ENCODE measurements at regions of chr16 and their contacts with region 1.

Region 1: DNA sequence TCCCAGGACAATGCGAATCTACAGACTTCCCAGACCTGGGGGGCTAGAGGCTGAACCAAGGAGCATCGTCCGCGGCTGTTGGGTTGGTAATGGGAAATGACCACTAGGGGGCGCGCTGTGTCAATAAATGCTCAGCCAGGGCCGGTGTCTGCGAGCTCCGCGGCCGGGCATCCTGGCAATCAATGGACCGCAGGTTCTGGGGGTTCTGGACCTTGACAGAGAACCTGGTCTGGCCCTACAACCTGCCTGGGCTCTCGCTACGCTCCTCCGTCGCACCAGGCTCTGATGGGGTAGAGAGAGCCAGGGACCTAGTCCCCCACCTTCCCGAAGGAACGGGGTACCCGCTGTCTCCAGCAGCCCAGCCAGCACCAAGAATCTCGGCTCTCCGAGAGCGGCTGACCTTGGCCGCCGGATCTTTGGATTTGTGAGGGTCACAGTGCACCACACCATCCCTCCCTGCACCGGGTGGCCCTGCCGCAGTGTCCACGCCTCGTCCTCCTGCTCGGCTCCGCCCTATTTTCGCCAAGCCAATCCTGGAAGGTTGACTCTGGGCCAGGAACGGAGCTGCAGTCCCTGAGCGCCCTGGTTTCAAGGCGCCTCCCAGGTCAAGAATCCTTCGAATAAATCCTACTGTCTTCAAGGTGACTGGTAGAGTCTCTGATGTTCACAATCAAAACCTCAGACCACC is 20.4 kb upstream of the BEAN1 start:
- DNase-seq: peak; percentile 94
- ATAC-seq: peak; percentile 82
- H3K4me3 Mint-ChIP-seq: peak overlapping the region; percentile 72
- H3K27ac Mint-ChIP-seq: peak overlapping the region; percentile 12
- H3K4me1 Mint-ChIP-seq: peaks cover 24% of the 10 kb centered on the region
- H3K27me3 Mint-ChIP-seq: peaks cover 4% of the 10 kb centered on the region

Region 2: GRCh38 chr16:65349626-65350025 is 1057.1 kb before region 1 on chr16:
- CTCF ChIA-PET with region 1: no interaction called
- POLR2A ChIA-PET with region 1: no interaction called
- intact Hi-C with region 1: no loop called
- DNase-seq: no peak
- ATAC-seq: no peak
- H3K4me3 Mint-ChIP-seq: no peak overlapping the region
- H3K27ac Mint-ChIP-seq: no peak overlapping the region
- H3K4me1 Mint-ChIP-seq: no peaks in the 10 kb centered on the region
- H3K27me3 Mint-ChIP-seq: no peaks in the 10 kb centered on the region

Region 3: DNA sequence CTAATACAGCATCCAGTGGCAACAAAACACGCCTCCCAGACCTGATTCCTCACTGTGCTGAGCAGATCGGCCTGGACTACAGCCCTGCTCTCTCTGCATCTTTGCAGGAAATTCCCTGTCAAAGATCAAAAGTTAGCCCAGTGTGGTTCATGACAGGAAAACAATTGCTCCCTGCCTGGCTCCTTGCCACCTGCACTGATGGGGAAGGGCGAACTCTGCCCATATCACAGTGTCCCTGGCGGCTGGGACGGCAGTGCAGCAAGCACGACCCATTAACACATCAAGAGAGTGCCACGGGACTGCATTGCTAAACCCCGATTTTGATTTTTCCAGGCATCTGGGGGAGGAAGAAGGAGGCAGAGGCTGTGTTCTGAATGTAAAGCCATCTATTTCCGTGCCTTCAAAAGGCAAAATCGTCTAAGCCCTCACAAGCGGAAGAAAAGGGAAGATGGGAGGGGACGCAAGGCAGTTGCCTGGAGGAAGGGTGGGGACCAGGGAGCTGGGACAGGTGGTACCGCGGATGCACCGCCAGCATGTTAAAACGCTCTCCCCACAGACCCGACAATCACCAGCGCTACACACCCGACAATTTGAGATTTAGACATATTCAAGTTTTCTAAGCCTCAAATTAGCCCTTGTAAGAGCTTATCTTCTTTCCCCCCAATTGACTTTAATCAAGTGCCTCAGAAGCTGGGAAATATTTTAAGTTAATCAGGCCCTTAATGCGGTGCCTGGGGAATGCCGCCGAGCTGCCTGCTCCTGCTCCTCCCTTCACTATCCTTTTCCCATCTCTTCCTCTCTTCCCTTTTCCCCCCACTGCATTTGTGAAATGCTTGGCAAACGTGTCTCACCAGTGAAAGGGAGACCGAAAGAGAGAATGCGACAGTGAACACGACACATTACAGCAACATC is 279.0 kb before region 1 on chr16:
- CTCF ChIA-PET with region 1: no interaction called
- POLR2A ChIA-PET with region 1: no interaction called
- intact Hi-C with region 1: no loop called
- DNase-seq: no peak
- ATAC-seq: no peak
- H3K4me3 Mint-ChIP-seq: no peak overlapping the region
- H3K27ac Mint-ChIP-seq: no peak overlapping the region
- H3K4me1 Mint-ChIP-seq: no peaks in the 10 kb centered on the region
- H3K27me3 Mint-ChIP-seq: peaks cover 38% of the 10 kb centered on the region

Region 4: DNA sequence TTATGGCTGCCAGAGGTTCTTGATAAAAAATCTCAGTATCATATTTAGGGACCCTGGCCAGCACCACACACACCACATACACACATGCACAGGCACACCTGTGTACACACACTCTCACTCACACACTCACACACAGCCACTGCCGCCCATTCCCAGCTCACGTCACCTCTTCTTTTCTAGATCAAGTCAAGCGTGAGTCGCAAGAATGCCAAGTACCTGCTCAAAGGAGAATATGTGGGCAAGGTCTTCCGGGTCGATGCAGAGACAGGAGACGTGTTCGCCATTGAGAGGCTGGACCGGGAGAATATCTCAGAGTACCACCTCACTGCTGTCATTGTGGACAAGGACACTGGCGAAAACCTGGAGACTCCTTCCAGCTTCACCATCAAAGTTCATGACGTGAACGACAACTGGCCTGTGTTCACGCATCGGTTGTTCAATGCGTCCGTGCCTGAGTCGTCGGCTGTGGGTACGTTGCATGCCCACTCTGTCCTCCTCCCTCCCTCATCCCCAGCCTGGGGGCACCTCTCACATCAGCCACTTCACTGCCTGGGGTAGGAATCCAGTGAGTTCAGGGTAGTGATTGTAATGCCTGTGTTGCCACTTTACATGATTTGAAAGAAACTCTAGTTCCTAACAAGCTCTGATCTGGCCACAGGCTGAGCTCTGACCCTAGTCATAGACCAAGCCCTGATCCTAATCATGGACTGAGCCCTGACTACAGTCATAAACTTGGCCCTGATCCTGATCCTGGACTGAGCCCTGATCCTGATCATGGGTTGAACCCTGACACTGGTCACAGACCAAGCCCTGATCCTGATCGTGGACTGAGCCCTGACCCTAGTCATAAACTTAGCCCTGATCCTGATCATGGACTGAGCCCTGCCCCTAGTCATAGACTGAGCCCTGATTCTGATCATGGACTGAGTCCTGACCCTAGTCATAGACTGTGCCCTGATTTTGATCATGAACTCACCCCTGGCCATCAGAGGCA is 19.8 kb before region 1 on chr16:
- CTCF ChIA-PET with region 1: no interaction called
- POLR2A ChIA-PET with region 1: no interaction called
- intact Hi-C with region 1: no loop called
- DNase-seq: no peak
- ATAC-seq: no peak
- H3K4me3 Mint-ChIP-seq: no peak overlapping the region
- H3K27ac Mint-ChIP-seq: no peak overlapping the region
- H3K4me1 Mint-ChIP-seq: no peaks in the 10 kb centered on the region
- H3K27me3 Mint-ChIP-seq: peaks cover 1% of the 10 kb centered on the region

Region 5: GRCh38 chr16:66474750-66475199 is 68.1 kb after region 1 on chr16:
- CTCF ChIA-PET with region 1: interaction called, 83 read pairs
- POLR2A ChIA-PET with region 1: interaction called, 3 read pairs
- intact Hi-C with region 1: loop called in 1 of 2 experiments (anchors 1 kb)
- DNase-seq: peak; percentile 77
- ATAC-seq: peak; percentile 91
- H3K4me3 Mint-ChIP-seq: no peak overlapping the region
- H3K27ac Mint-ChIP-seq: peak overlapping the region; percentile 68
- H3K4me1 Mint-ChIP-seq: peaks cover 25% of the 10 kb centered on the region
- H3K27me3 Mint-ChIP-seq: no peaks in the 10 kb centered on the region

Region 6: GRCh38 chr16:66516808-66517585 is 110.3 kb after region 1 on chr16:
- CTCF ChIA-PET with region 1: interaction called, 8 read pairs
- POLR2A ChIA-PET with region 1: no interaction called
- intact Hi-C with region 1: loop called (anchors 1 to 2 kb)
- DNase-seq: peak; percentile 91
- ATAC-seq: peak; percentile 90
- H3K4me3 Mint-ChIP-seq: peak overlapping the region; percentile 65
- H3K27ac Mint-ChIP-seq: peak overlapping the region; percentile 92
- H3K4me1 Mint-ChIP-seq: peaks cover 66% of the 10 kb centered on the region
- H3K27me3 Mint-ChIP-seq: no peaks in the 10 kb centered on the region

Region 7: DNA sequence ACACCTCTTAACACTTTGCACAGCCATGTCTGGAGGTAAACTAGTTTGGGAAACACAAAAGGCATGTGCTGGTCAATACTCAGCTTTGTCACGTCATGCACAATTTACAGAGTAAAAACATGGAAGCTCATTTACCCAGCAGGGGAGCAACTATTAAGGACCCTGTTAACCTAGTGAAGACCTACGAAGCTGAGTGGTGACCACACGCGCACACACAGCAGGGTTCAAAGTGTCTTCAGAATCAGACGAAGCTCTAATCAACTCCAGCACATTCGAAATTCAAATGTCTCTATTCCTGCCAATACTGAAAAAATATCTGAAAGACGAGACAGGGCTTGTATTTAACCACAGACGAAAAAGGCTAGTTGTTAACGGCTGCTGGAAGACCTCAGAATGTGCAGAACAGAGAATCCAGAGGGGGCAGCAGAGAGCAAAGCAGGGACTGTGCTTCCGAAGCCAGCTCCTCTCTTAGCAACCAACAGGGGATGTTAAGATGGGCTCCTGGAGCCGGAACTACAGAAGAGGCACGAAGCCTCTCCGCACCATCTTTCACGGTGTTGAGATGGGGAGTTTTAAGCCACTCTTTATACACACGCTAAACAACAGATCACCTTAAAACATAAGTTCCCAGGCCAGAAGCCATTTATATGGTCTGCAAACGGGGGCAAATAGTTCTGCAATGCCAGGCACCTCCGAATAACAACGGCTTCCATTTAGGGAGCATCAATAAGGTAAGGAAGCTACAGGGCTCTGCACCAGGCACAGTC is 244.2 kb after region 1 on chr16:
- CTCF ChIA-PET with region 1: interaction called, 16 read pairs
- POLR2A ChIA-PET with region 1: no interaction called
- intact Hi-C with region 1: loop called in 1 of 2 experiments (anchors 5 kb)
- DNase-seq: peak; percentile 89
- ATAC-seq: peak; percentile 100
- H3K4me3 Mint-ChIP-seq: peak overlapping the region; percentile 18
- H3K27ac Mint-ChIP-seq: peak overlapping the region; percentile 26
- H3K4me1 Mint-ChIP-seq: peaks cover 10% of the 10 kb centered on the region
- H3K27me3 Mint-ChIP-seq: no peaks in the 10 kb centered on the region

Region 8: DNA sequence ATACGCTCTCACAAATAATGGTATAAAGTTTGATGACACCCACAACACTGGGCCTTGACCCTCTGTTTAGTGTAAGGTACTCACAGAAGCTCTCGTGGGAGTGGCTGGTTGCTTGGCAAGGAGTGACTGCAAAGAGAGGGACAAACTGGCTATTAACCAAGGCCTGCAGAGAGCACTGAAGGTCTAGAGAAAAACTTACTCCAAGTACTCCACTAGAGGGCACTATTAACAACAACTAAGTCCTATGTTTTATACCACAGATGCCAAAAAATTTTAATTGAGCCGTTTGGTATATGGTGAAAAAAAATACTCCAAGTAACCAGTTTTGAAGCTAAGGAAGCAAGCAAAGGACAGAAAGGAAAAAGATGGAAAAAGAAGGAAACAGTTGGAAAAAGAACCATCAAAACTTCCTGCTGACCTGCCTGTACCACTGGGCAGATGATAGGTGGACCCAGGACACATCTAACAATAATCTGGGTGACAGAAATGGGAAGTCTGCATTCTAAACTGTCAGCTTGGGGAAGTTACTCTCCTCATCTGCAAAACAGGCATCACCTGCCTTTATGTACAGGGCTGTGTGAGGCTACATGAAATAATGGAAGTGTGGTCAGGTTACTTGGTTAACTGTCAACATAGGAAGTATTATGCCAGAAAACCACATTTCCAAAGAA is 321.6 kb after region 1 on chr16:
- CTCF ChIA-PET with region 1: interaction called, 12 read pairs
- POLR2A ChIA-PET with region 1: no interaction called
- intact Hi-C with region 1: no loop called
- DNase-seq: no peak
- ATAC-seq: peak; percentile 81
- H3K4me3 Mint-ChIP-seq: no peak overlapping the region
- H3K27ac Mint-ChIP-seq: no peak overlapping the region
- H3K4me1 Mint-ChIP-seq: no peaks in the 10 kb centered on the region
- H3K27me3 Mint-ChIP-seq: no peaks in the 10 kb centered on the region

Region 9: DNA sequence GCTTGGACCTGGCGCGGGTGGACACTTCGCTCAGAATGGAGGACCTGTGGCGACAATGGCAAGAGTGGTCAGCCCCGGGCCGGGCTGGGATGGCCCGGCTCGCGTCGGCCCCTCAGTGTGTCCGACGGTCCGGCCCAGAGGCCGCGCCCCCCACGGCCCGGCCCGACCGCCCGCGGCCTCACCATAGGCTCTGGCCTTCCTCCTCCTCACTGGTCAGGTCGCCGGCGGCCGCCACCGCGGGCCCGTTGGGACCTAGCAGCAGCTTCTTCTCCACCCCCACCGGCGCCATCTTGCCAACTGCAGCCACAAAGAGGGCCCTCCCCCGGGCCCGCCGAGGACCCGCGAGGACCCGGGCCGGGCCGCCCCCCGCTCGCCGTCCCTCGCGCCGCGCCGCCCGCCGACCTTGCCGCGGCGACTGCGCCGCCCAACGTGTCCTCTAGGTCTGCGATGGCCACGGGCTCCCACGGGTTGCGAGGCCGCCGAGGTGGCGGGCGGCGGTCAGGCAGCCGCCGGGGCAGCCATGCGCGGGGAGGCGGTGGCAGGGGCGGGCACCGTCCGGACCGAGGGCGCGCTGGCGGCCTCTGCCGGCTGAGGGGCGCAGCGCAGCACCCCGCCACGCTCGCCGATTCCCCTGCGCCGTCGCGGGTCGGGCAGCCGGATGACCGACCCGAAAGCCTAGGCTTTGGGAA is 344.8 kb after region 1 on chr16 and contains the start of gene DYNC1LI2:
- CTCF ChIA-PET with region 1: interaction called, 4 read pairs
- POLR2A ChIA-PET with region 1: no interaction called
- intact Hi-C with region 1: loop called in 1 of 2 experiments (anchors 1 kb)
- DNase-seq: peak; percentile 89
- ATAC-seq: peak; percentile 93
- H3K4me3 Mint-ChIP-seq: peak within 1 kb of the TSS; percentile 81
- H3K27ac Mint-ChIP-seq: peak within 1 kb of the TSS; percentile 80
- H3K4me1 Mint-ChIP-seq: peaks cover 38% of the 10 kb centered on the region
- H3K27me3 Mint-ChIP-seq: peaks cover 9% of the 10 kb centered on the region
- total RNA-seq, gene DYNC1LI2: 32.3 to 35.7 TPM